Aorta (tissue), 5 donors: ENCODE measurements at regions of chr1 and their contacts with region 1.

Region 1: GRCh38 chr1:205485338-205486228 is 18.9 kb upstream of the CDK18 start:
- DNase-seq: peak; percentile 66 to 82
- ATAC-seq: peak; percentile 87
- H3K4me3 ChIP-seq: no peak overlapping the region
- H3K27ac ChIP-seq: no peak overlapping the region
- H3K4me1 ChIP-seq: no peaks in the 10 kb centered on the region
- H3K27me3 ChIP-seq: peaks cover 0 to 2% of the 10 kb centered on the region in 2 donors

Region 2: DNA sequence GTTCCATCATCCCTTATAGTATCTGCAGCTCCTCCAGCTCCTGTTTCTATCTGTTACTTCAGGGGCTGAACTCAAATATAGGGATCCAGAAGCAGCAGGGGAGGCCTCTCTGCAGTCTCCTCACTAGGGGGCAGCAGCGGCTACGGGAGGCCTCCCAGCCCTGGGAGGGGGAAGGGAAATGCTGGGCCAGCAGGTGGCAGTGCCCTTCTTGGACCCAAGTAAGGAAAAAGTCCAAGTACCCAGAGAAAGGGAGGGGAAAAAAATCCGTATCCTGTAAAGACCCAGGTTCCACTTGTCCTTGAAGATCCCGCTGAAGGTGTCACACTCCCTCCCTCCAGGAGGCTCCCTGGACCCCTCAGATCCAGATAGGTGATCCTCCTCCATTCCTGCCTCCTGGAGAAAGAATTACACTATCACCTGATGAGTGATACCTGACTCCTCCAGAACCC is 149.9 kb before region 1 on chr1:
- intact Hi-C with region 1: loop called (anchors 2 to 5 kb)
- DNase-seq: peak; percentile 88 to 91
- ATAC-seq: peak; percentile 74
- H3K4me3 ChIP-seq: no peak overlapping the region
- H3K27ac ChIP-seq: no peak overlapping the region
- H3K4me1 ChIP-seq: no peaks in the 10 kb centered on the region
- H3K27me3 ChIP-seq: no peaks in the 10 kb centered on the region

Region 3: DNA sequence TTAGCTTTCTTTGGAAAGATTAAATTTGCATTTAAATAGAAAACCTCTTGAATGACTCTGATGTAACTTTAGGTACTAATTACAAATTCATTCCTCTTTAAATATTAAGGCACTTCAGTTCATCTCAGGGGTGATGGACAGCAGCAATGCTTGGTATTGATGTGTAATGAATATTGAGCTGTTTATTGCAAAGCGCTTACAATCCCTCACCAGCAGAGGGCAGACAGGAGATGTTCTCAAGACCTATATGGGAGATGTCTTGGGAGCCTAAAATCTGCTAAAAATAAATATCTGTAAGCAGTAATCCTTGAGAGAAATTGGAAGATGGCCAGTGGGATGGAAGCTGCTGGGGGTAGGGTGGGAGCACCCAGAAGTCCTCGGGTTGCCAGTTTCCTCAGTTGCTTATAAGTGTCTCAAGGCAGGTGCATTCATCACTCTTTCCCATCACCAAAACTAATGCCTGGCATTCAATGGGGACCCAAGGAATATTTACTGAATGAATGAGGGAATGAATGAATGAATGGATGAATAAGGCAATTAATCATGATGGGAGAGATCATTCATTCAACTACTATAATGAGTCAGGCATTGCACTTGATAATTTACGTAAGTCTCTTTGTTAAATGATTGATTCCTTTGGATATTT is 131.2 kb before region 1 on chr1:
- intact Hi-C with region 1: loop called (anchors 1 to 5 kb)
- DNase-seq: peak; percentile 67 to 72
- ATAC-seq: peak; percentile 66
- H3K4me3 ChIP-seq: no peak overlapping the region
- H3K27ac ChIP-seq: no peak overlapping the region
- H3K4me1 ChIP-seq: no peaks in the 10 kb centered on the region
- H3K27me3 ChIP-seq: no peaks in the 10 kb centered on the region

Region 4: GRCh38 chr1:205396967-205397616 is 88.5 kb before region 1 on chr1:
- intact Hi-C with region 1: loop called in 1 of 2 experiments (anchors 5 kb)
- DNase-seq: no peak
- ATAC-seq: no peak
- H3K4me3 ChIP-seq: no peak overlapping the region
- H3K27ac ChIP-seq: no peak overlapping the region
- H3K4me1 ChIP-seq: no peaks in the 10 kb centered on the region
- H3K27me3 ChIP-seq: no peaks in the 10 kb centered on the region

Region 5: GRCh38 chr1:205523891-205524793 is 38.6 kb after region 1 on chr1:
- intact Hi-C with region 1: loop called (anchors 1 to 2 kb)
- DNase-seq: peak; percentile 82 to 94
- ATAC-seq: peak; percentile 71
- H3K4me3 ChIP-seq: no peak overlapping the region
- H3K27ac ChIP-seq: no peak overlapping the region
- H3K4me1 ChIP-seq: no peaks in the 10 kb centered on the region
- H3K27me3 ChIP-seq: no peaks in the 10 kb centered on the region